Cardiac septum (tissue), 1 donor: ENCODE measurements at regions of chr6 and their contacts with region 1.

Region 1: DNA sequence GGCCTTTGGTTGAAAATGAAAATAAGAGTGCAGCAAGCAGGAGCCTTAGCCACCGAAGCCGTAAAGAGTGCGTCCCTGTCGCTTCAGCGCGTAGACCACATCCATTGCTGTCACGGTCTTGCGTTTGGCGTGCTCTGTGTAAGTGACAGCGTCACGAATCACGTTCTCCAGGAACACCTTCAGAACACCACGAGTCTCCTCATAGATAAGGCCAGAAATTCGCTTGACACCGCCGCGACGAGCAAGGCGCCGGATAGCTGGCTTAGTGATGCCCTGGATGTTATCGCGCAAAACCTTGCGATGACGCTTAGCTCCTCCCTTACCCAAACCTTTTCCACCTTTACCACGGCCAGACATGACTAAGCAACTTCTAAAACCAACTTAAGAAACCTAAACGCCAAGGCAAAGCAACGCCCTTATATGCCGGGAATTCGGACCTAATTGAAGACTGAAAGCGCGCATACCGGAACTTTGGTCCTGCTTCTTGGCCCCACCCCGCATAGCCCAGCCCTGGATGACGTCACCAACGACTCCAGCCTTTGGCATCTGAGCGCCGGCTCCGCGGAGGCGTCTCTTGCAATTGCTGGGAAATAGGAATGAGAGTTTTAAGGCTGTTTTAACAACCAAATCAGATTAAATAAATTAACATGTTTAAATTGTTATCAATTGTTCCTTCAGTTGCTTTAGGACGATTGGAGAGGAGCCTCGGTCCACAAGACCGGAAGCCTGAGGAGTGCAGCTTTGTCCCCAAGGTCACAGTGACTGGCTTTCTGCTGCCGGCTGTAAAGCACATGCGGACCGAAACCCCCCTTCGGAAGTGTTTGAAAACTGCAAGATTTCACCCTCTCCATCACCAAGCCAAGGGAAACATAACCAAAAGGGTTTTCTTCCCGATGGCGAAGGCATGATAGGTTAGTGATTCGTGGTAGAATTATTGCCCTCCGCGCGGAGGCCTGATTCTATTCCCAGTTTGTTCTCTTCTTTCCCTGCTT is 79.6 kb upstream of the BTN3A2 start:
- DNase-seq: peak; percentile 98

Region 2: GRCh38 chr6:26054857-26055669 is 230.4 kb before region 1 on chr6:
- intact Hi-C with region 1: loop called (anchors 10 kb)
- DNase-seq: peak; percentile 93

Region 3: GRCh38 chr6:26175428-26176181 is 109.8 kb before region 1 on chr6:
- intact Hi-C with region 1: loop called (anchors 10 kb)
- DNase-seq: no peak

Region 4: GRCh38 chr6:26187981-26188635 is 97.3 kb before region 1 on chr6:
- intact Hi-C with region 1: no loop called
- DNase-seq: no peak

Region 5: GRCh38 chr6:26270903-26271667 is 14.4 kb before region 1 on chr6:
- intact Hi-C with region 1: loop called (anchors 1 kb)
- DNase-seq: no peak

Region 6: GRCh38 chr6:26304213-26304796 is 18.9 kb after region 1 on chr6:
- intact Hi-C with region 1: no loop called
- DNase-seq: no peak

Region 7: DNA sequence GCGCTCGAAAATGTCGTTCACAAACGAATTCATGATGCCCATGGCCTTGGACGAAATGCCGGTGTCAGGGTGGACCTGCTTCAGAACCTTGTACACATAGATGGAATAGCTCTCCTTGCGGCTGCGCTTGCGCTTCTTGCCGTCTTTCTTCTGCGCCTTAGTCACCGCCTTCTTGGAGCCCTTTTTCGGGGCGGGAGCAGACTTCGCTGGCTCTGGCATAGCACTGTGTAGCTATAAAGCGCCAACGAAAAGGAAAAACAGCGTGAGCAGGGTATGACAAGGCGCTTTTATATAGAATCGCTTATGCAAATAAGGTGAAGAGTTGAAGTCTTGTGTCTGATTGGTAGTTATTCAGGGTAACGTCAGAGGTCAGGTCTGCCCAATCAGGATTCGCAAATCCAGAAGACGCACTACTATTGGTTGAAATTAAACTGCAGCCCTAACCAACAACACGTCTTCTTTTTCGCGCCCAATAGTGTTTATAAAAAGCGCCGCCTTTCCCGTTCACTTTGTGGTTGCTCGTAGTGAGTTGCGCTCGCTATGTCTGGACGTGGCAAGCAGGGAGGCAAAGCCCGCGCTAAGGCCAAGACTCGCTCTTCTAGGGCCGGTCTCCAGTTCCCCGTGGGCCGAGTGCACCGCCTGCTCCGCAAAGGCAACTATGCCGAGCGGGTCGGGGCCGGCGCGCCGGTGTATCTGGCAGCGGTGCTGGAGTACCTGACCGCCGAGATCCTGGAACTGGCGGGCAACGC is 847.3 kb after region 1 on chr6:
- intact Hi-C with region 1: loop called (anchors 10 kb)
- DNase-seq: peak; percentile 87